Activated CD4-positive, alpha-beta memory T cell treated with anti-CD3 and anti-CD28 coated beads for 36 hours (primary cell): ENCODE measurements at regions of chr6 and their contacts with region 1.

Region 1: GRCh38 chr6:154247119-154247861 is 109.3 kb downstream of the IPCEF1 start:
- DNase-seq: peak; percentile 55
- H3K4me3 Mint-ChIP-seq: peak overlapping the region; percentile 87
- H3K27ac Mint-ChIP-seq: peak overlapping the region; percentile 79
- H3K4me1 Mint-ChIP-seq: peaks cover 80% of the 10 kb centered on the region
- H3K27me3 Mint-ChIP-seq: no peaks in the 10 kb centered on the region

Region 2: DNA sequence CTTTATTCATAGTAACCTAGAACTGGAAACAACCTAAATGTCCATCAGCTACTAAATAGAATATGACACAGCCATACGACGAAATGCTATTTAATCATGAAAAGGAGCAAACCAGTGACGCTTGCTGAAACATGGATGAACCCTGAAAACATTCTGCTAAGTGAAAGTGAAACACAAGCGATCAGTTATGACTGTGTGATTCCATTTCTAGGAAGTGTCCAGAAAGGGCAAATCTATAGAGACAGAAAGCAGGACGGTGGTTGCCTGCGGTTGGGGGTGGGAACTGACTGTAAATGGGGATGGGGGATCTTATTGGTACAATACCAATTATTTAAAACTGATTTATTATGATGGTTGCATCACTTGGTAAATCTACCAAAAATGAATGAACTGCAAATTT is 17.5 kb before region 1 on chr6:
- CTCF ChIA-PET with region 1: interaction called, 9 read pairs
- POLR2A ChIA-PET with region 1: interaction called, 24 read pairs
- intact Hi-C with region 1: loop called (anchors 1 kb)
- DNase-seq: peak; percentile 88
- H3K4me3 Mint-ChIP-seq: peak overlapping the region; percentile 71
- H3K27ac Mint-ChIP-seq: peak overlapping the region; percentile 89
- H3K4me1 Mint-ChIP-seq: peaks cover 80% of the 10 kb centered on the region
- H3K27me3 Mint-ChIP-seq: no peaks in the 10 kb centered on the region

Region 3: DNA sequence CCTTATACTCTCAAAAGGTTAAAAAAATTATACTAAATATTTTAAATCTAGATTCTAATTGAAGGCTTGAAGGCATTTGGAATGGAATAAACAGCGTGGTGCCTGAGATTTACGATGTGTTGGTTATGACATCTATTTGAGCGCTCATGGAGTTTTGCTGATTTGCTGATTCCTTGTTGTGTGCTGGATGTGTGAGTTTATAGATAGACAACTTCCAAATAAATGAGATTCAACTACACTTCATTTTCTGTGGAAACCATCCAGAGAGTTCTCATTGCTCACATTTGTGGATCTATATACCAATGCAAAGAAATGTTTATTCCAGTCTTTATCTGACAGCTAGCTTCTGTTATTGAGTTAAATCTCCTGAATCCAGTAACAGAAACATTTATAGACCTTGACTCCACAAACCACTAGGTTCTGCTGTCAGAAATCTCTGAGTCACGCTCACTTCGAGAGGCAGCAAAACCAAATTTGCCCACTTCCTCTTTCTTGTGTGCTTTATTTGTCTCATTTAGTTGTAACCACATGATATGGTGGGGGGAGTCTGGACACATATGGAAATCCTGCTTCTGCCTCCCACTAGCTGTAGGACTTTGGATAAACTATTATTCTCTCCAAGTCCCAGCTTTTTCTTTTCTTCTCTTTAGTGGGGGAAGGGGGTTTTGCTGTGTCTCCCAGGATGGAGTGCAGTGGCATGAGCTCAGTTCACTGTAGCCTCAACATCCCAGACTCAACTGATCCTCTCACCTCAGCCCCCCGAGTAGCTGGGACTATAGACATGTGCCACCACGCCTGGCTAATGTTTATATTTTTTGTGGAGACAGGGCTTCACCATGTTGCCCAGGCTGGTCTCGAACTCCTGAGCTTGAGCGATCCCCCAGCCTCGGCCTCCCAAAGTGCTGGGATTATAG is 54.8 kb after region 1 on chr6:
- CTCF ChIA-PET with region 1: interaction called, 3 read pairs
- POLR2A ChIA-PET with region 1: no interaction called
- intact Hi-C with region 1: loop called (anchors 1 kb)
- DNase-seq: peak; percentile 43
- H3K4me3 Mint-ChIP-seq: no peak overlapping the region
- H3K27ac Mint-ChIP-seq: no peak overlapping the region
- H3K4me1 Mint-ChIP-seq: peaks cover 9% of the 10 kb centered on the region
- H3K27me3 Mint-ChIP-seq: peaks cover 2% of the 10 kb centered on the region

Region 4: GRCh38 chr6:154606457-154606856 is 359.2 kb after region 1 on chr6:
- CTCF ChIA-PET with region 1: no interaction called
- POLR2A ChIA-PET with region 1: no interaction called
- intact Hi-C with region 1: loop called (anchors 5 kb)
- DNase-seq: peak; percentile 96
- H3K4me3 Mint-ChIP-seq: peak overlapping the region; percentile 24
- H3K27ac Mint-ChIP-seq: peak overlapping the region; percentile 67
- H3K4me1 Mint-ChIP-seq: peaks cover 43% of the 10 kb centered on the region
- H3K27me3 Mint-ChIP-seq: peaks cover 4% of the 10 kb centered on the region

Region 5: GRCh38 chr6:155260686-155261085 is 1013.4 kb after region 1 on chr6:
- CTCF ChIA-PET with region 1: no interaction called
- POLR2A ChIA-PET with region 1: no interaction called
- intact Hi-C with region 1: no loop called
- DNase-seq: no peak
- H3K4me3 Mint-ChIP-seq: no peak overlapping the region
- H3K27ac Mint-ChIP-seq: no peak overlapping the region
- H3K4me1 Mint-ChIP-seq: peaks cover 14% of the 10 kb centered on the region
- H3K27me3 Mint-ChIP-seq: no peaks in the 10 kb centered on the region